PC-9 (cell line): ENCODE measurements at regions of chr16 and their contacts with region 1.

Region 1: GRCh38 chr16:50719518-50720337 is 22.2 kb upstream of the CYLD start:
- DNase-seq: peak; percentile 54 to 77
- H3K4me3 ChIP-seq: peak overlapping the region; percentile 63
- H3K27ac ChIP-seq: peak overlapping the region; percentile 93
- H3K4me1 ChIP-seq: peaks cover 50% of the 10 kb centered on the region
- H3K27me3 ChIP-seq: no peaks in the 10 kb centered on the region
- CTCF ChIP-seq: no peak; the same call in 1 of the 2 replicates

Region 2: GRCh38 chr16:49407873-49408550 is 1311.7 kb before region 1 on chr16:
- CTCF ChIA-PET with region 1: no interaction called
- POLR2A ChIA-PET with region 1: interaction called, 20 read pairs
- intact Hi-C with region 1: no loop called
- DNase-seq: peak; percentile 46 to 59
- H3K4me3 ChIP-seq: no peak overlapping the region
- H3K27ac ChIP-seq: no peak overlapping the region
- H3K4me1 ChIP-seq: no peaks in the 10 kb centered on the region
- H3K27me3 ChIP-seq: no peaks in the 10 kb centered on the region
- CTCF ChIP-seq: peak; percentile 70

Region 3: GRCh38 chr16:50245417-50246298 is 474.1 kb before region 1 on chr16:
- CTCF ChIA-PET with region 1: no interaction called
- POLR2A ChIA-PET with region 1: interaction called, 13 read pairs
- intact Hi-C with region 1: no loop called
- DNase-seq: peak; percentile 76 to 78
- H3K4me3 ChIP-seq: peak overlapping the region; percentile 85
- H3K27ac ChIP-seq: peak overlapping the region; percentile 75
- H3K4me1 ChIP-seq: peaks cover 7% of the 10 kb centered on the region
- H3K27me3 ChIP-seq: no peaks in the 10 kb centered on the region
- CTCF ChIP-seq: no peak

Region 4: DNA sequence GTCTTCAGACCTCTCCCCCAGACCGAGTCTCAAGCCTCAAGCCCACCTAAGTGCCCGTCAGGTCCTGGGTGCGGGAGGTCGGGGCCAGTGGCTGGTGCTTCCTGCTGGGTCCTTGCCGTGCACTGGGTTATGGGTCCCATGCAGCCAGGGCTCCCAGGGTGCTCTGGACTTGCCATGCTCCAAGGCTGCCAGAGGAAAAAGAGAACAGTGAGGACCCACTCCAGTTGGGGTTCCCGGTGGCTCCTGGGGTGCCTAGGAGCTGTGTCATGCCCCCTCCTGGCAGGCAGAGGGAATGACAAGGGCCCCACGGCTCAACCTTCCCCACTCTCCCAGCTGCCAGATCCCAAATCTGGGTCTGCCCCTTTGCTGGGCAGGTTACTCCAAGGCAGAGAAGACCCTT is 42.4 kb before region 1 on chr16:
- CTCF ChIA-PET with region 1: interaction called, 3 read pairs
- POLR2A ChIA-PET with region 1: no interaction called
- intact Hi-C with region 1: loop called (anchors 5 kb)
- DNase-seq: no peak
- H3K4me3 ChIP-seq: no peak overlapping the region
- H3K27ac ChIP-seq: no peak overlapping the region
- H3K4me1 ChIP-seq: peaks cover 13% of the 10 kb centered on the region
- H3K27me3 ChIP-seq: no peaks in the 10 kb centered on the region
- CTCF ChIP-seq: peak; percentile 55

Region 5: GRCh38 chr16:50741808-50742575 is 22.3 kb after region 1 on chr16 and contains the start of gene CYLD:
- CTCF ChIA-PET with region 1: interaction called, 3 read pairs
- POLR2A ChIA-PET with region 1: interaction called, 9 read pairs
- intact Hi-C with region 1: loop called (anchors 1 kb)
- DNase-seq: peak; percentile 97 to 99
- H3K4me3 ChIP-seq: peak within 1 kb of the TSS; percentile 89
- H3K27ac ChIP-seq: peak within 1 kb of the TSS; percentile 29; the same call in 1 of the 2 replicates
- H3K4me1 ChIP-seq: peaks cover 34% of the 10 kb centered on the region
- H3K27me3 ChIP-seq: no peaks in the 10 kb centered on the region; the same call in 1 of the 2 replicates
- CTCF ChIP-seq: no peak
- total RNA-seq, gene CYLD: 12.6 and 19.0 TPM in 2 replicates